Ascending aorta (tissue), 2 donors: ENCODE measurements at regions of chr1 and their contacts with region 1.

Region 1: DNA sequence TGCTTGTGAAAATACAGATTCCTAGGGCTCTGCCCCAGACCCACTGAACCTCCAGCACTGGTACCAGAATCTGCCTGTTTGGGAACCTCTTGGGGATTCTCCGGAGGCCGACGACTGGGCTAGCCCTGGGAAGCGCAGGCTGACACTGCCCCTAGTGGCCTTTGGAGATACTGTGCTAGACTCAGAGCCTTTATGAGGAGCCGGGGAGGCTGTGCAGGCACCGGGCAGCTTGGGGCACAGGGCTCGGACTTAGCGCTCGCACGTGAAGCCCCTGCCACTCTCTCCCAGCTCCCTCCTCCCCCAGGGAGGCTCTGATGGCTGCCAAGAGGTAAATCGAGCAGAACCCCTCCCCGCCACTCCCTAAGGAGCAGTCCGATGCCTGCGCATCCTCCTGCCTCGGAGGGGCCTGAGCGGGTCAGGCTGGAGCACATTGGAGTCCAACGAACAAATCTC is 144.6 kb upstream of the TNR start:
- DNase-seq: peak in 1 of 2 donors; percentile 78
- H3K4me3 ChIP-seq: no peak overlapping the region
- H3K27ac ChIP-seq: peak overlapping the region in 1 of 2 donors; percentile 89
- H3K4me1 ChIP-seq: peaks cover 7 to 24% of the 10 kb centered on the region in 2 donors
- H3K27me3 ChIP-seq: no peaks in the 10 kb centered on the region
- CTCF ChIP-seq: peak; percentile 65 to 91 (median 89)

Region 2: DNA sequence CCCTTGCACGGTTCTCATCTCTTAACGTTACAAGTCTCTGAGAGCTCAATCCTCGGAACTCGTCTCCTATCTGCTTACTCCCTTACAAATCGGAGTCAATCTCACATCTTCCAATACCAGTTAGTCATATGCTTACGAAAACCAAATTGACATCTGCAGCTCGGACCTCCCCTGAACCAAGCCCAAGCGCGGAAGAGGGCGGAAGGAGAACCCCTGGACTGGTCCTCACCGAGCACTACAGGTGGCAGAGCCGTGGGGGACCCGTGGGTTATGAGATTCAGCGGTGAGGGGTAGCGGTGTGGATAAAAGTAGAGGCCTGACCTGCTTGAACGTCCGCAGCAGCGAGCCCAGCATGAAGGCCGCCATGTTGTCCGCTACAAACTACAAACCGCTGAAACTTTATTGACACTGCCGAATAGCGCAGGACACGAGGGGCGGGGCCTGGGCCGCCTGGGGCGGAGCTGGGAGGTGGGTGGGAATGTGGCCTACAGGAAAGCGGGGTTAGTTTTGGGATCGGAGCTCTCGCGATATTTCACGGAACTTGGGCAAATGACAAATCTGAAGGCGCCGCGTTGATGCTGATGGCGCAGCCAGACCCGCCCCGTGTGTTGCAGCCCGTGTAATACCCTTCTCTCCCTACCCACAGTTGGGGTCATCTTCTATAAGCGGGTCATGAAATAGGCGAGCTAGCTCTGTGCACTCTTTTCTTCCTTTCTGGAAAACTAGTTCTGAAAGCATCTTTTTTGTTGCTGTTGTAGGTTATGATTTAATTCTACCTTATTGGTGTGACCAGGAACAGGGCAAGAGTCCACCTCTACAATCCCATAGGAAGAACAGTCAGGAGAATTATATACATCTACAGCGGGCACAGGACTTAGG is 864.7 kb before region 1 on chr1 and contains the start of gene MRPS14:
- intact Hi-C with region 1: loop called (anchors 10 kb)
- DNase-seq: peak; percentile 91 to 99
- H3K4me3 ChIP-seq: peak within 1 kb of the TSS; percentile 75 to 89
- H3K27ac ChIP-seq: peak within 1 kb of the TSS; percentile 63 to 81
- H3K4me1 ChIP-seq: peaks cover 0 to 4% of the 10 kb centered on the region in 2 donors
- H3K27me3 ChIP-seq: no peaks in the 10 kb centered on the region
- CTCF ChIP-seq: no peak
- total RNA-seq, gene MRPS14: 8.2 TPM

Region 3: DNA sequence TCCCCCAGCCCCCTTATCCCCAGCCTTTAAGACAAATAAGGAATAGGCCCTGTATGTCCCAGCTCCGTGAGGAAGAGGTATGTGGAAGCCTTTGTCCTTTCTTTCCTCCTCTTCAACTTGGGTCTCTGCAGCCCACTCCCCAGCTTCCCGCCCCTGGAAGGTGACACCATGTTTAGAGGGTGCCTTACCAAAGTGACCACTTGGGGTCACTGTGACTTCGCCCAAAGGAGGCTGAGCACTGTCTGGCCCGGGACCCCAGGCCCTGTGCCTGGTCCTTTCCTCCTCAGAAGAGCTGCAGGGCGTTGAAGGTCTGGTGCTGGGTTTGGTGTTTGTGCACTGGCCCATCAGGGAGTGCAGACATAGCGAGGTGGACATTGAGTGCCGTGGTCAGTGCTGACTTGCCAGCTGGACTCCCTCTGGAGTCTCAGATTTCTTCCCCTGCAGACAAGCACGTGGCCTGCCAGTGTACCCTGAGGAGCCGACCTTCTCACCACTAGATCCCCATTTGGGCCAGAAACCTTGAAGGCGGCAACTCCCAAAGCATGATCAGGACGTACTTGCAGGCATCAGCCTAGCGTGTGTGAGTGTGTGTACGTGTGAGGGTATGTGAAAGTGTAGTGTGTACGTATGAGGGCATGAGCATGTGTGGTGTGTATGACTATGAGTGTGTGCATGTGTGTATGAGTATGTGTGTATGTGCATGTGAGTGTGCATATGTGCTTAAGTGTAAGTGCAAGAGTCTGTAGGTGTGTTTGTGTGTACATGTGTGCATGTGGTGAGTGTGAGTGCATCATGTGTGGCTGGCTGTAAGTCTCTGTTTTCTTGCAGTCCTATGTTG is 514.0 kb before region 1 on chr1:
- intact Hi-C with region 1: loop called (anchors 10 kb)
- DNase-seq: no peak
- H3K4me3 ChIP-seq: no peak overlapping the region
- H3K27ac ChIP-seq: no peak overlapping the region
- H3K4me1 ChIP-seq: no peaks in the 10 kb centered on the region
- H3K27me3 ChIP-seq: no peaks in the 10 kb centered on the region
- CTCF ChIP-seq: peak; percentile 57 to 82 (median 72)

Region 4: GRCh38 chr1:175481126-175482066 is 406.6 kb before region 1 on chr1:
- intact Hi-C with region 1: loop called (anchors 1 kb)
- DNase-seq: no peak
- H3K4me3 ChIP-seq: no peak overlapping the region
- H3K27ac ChIP-seq: no peak overlapping the region
- H3K4me1 ChIP-seq: no peaks in the 10 kb centered on the region
- H3K27me3 ChIP-seq: no peaks in the 10 kb centered on the region
- CTCF ChIP-seq: peak; percentile 58 to 70 (median 60)

Region 5: DNA sequence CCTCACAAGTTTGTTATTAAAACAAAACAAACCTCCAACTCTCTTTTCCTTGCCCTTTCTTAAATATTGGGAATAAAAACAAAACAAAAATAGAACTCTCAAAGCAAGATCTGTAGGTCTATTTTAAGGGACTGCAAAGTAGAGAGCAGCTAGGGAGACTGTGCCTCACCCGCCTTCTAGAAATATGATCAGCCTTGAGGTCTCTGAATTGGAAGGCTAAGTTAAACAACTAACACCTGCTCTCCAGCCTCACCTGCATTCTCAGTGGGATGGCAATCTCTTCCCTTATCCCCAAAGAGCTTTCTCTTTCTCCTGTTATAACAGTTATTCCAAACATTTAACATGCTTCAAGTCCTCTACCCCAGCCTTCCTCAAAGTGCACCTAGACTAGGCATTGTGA is 69.1 kb before region 1 on chr1:
- intact Hi-C with region 1: loop called (anchors 2 kb)
- DNase-seq: no peak
- H3K4me3 ChIP-seq: no peak overlapping the region
- H3K27ac ChIP-seq: peak overlapping the region; percentile 70 to 87
- H3K4me1 ChIP-seq: peaks cover 6 to 34% of the 10 kb centered on the region in 2 donors
- H3K27me3 ChIP-seq: no peaks in the 10 kb centered on the region
- CTCF ChIP-seq: no peak

Region 6: DNA sequence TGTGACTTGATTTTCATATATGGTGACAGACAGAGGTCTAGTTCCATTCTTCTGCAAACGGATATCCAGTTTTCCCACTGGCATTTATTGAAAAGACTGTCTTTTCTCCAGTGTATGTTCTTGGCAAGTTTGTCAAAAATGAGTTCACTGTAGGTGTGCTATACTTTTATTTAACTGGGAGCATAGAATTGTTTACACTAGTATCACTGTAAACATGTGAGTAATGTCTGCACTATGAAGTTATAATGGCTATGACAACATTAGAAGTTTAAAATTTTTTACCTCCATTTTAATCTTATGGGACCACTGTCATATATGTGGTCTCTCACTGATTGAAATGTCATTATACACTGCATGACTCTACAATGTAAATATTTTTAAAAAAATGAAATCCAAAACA is 112.3 kb after region 1 on chr1:
- intact Hi-C with region 1: no loop called
- DNase-seq: no peak
- H3K4me3 ChIP-seq: no peak overlapping the region
- H3K27ac ChIP-seq: no peak overlapping the region
- H3K4me1 ChIP-seq: no peaks in the 10 kb centered on the region
- H3K27me3 ChIP-seq: no peaks in the 10 kb centered on the region
- CTCF ChIP-seq: no peak